GM12878 (cell line): ENCODE measurements at regions of chr5 and their contacts with region 1.

Region 1: GRCh38 chr5:154467655-154468354 is 10.2 kb downstream of the HAND1 start:
- DNase-seq: peak; percentile 42
- ATAC-seq: peak; percentile 99
- H3K4me3 ChIP-seq: no peak overlapping the region
- H3K27ac ChIP-seq: no peak overlapping the region
- H3K4me1 ChIP-seq: peaks cover 12% of the 10 kb centered on the region
- H3K27me3 ChIP-seq: peaks cover 0 to 3% of the 10 kb centered on the region in 2 experiments; a peak in 1 of 4 replicates
- CTCF ChIP-seq: peak; percentile 89 to 96 (median 92)
- EP300 ChIP-seq: no peak
- POLR2A ChIP-seq: no peak
- RAD21 ChIP-seq: peak; percentile 98

Region 2: DNA sequence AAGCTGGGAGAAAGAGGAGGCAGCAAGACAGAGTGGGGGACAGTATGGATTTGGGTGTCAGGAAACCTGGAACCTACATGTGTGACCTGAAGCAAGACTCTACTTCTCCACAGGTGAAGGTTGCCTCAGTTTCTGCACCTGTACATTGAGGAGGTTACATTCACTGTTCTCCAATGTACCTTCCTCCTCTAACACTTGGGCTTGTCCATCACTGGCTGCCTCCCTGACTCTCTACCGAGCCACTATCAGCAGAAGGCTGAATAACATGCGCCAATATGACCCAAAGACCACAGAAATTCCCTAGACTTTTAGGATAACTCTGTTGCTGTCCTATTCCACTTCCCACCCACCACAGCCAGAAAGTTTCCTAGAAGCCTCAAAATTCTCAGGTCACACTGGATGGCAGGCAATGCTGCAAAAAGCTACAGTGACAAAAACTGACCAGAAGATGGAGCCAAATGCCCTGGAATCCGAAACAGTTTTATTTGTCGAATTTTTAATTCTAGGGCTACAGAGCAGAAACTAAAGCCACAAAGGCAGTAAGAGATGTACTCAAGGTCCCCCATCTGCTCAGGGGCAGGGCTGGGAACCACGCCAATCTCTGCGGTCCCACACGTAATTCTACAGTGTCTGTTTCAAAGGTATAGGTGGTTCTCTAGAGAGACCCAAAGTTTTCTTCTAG is 493.5 kb before region 1 on chr5:
- CTCF ChIA-PET with region 1: interaction called, 5 read pairs
- POLR2A ChIA-PET with region 1: no interaction called
- RAD21 ChIA-PET with region 1: interaction called, 8 read pairs
- SMC1A ChIA-PET with region 1: no interaction called
- in situ Hi-C with region 1: no loop called
- intact Hi-C with region 1: loop called (anchors 5 kb)
- DNase-seq: no peak
- ATAC-seq: peak; percentile 83
- H3K4me3 ChIP-seq: no peak overlapping the region
- H3K27ac ChIP-seq: no peak overlapping the region
- H3K4me1 ChIP-seq: no peaks in the 10 kb centered on the region
- H3K27me3 ChIP-seq: peaks cover 2% of the 10 kb centered on the region in 2 experiments; a peak in 2 of 4 replicates
- CTCF ChIP-seq: peak; percentile 58 to 79 (median 75); a peak in 5 of 6 replicates
- EP300 ChIP-seq: no peak
- POLR2A ChIP-seq: no peak
- RAD21 ChIP-seq: peak; percentile 90

Region 3: GRCh38 chr5:154445422-154446182 is 22.2 kb before region 1 on chr5 and contains the start of gene SAP30L:
- CTCF ChIA-PET with region 1: interaction called, 13 read pairs
- POLR2A ChIA-PET with region 1: no interaction called
- RAD21 ChIA-PET with region 1: interaction called, 4 read pairs
- SMC1A ChIA-PET with region 1: interaction called, 7 read pairs
- in situ Hi-C with region 1: no loop called
- intact Hi-C with region 1: no loop called
- DNase-seq: peak; percentile 81
- ATAC-seq: peak; percentile 91
- H3K4me3 ChIP-seq: peak within 1 kb of the TSS; percentile 87
- H3K27ac ChIP-seq: peak within 1 kb of the TSS; percentile 84
- H3K4me1 ChIP-seq: peaks cover 5% of the 10 kb centered on the region
- H3K27me3 ChIP-seq: no peaks in the 10 kb centered on the region
- CTCF ChIP-seq: no peak
- EP300 ChIP-seq: no peak
- POLR2A ChIP-seq: peak; percentile 85
- RAD21 ChIP-seq: no peak
- polyA plus RNA-seq, gene SAP30L: 2.4 to 15.4 TPM

Region 4: GRCh38 chr5:154505611-154506010 is 37.8 kb after region 1 on chr5:
- CTCF ChIA-PET with region 1: interaction called, 24 read pairs
- POLR2A ChIA-PET with region 1: no interaction called
- RAD21 ChIA-PET with region 1: interaction called, 19 read pairs
- SMC1A ChIA-PET with region 1: interaction called, 13 read pairs
- in situ Hi-C with region 1: no loop called
- intact Hi-C with region 1: no loop called
- DNase-seq: no peak
- ATAC-seq: no peak
- H3K4me3 ChIP-seq: no peak overlapping the region
- H3K27ac ChIP-seq: no peak overlapping the region
- H3K4me1 ChIP-seq: peaks cover 41% of the 10 kb centered on the region
- H3K27me3 ChIP-seq: no peaks in the 10 kb centered on the region
- CTCF ChIP-seq: no peak
- EP300 ChIP-seq: no peak
- POLR2A ChIP-seq: no peak
- RAD21 ChIP-seq: no peak

Region 5: GRCh38 chr5:154570572-154571324 is 102.9 kb after region 1 on chr5:
- CTCF ChIA-PET with region 1: interaction called, 135 read pairs
- POLR2A ChIA-PET with region 1: no interaction called
- RAD21 ChIA-PET with region 1: interaction called, 81 read pairs
- SMC1A ChIA-PET with region 1: interaction called, 90 read pairs
- in situ Hi-C with region 1: no loop called
- intact Hi-C with region 1: loop called (anchors 1 kb)
- DNase-seq: no peak
- ATAC-seq: no peak
- H3K4me3 ChIP-seq: no peak overlapping the region
- H3K27ac ChIP-seq: no peak overlapping the region
- H3K4me1 ChIP-seq: peaks cover 6% of the 10 kb centered on the region
- H3K27me3 ChIP-seq: no peaks in the 10 kb centered on the region
- CTCF ChIP-seq: no peak
- EP300 ChIP-seq: no peak
- POLR2A ChIP-seq: no peak
- RAD21 ChIP-seq: no peak

Region 6: DNA sequence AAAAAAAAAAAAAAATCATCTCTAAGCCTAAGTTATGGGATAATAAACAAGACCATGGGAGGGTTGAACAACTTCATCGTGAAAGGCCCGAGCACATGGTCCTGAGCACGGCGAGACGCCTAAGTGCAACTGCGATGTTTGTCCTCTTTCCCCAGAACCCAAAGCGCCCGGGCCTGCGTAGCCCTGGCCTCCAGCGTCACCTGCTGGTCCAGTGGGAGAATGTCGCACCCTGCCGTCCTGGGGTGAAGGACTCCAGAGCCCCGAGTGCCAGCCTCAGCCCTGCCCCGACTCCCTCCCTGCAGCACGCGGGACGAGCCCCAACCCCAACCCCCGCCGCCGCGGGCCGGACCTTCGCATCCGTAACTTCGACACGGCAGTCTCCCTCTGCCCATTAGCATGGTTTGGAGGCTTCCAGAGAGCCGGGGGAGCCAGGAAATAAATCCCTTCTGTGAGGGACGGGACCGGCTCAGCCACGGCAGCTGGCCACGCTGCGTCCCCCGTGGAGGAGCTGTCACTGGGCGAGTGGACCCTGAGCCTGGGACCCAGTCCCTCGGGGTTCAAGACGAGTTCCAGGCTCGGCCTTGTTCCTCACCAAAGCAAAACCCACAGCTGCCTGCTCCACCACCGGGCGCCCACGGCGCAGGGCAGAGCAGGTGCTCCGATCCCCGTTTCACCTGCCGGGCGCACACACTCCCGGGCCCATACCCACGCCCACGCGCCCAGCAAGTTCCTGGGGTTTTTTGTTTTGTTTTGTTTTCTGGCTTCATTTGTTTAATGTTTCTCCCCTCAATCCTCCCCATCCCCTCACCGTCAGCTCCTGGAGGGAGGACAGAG is 142.7 kb after region 1 on chr5:
- CTCF ChIA-PET with region 1: interaction called, 121 read pairs
- POLR2A ChIA-PET with region 1: no interaction called
- RAD21 ChIA-PET with region 1: interaction called, 52 read pairs
- SMC1A ChIA-PET with region 1: interaction called, 81 read pairs
- in situ Hi-C with region 1: loop called (anchors 5 kb)
- intact Hi-C with region 1: loop called (anchors 1 kb)
- DNase-seq: peak; percentile 27
- ATAC-seq: peak; percentile 98
- H3K4me3 ChIP-seq: peak overlapping the region; percentile 72; the same call in 1 of the 2 replicates
- H3K27ac ChIP-seq: no peak overlapping the region
- H3K4me1 ChIP-seq: peaks cover 12% of the 10 kb centered on the region
- H3K27me3 ChIP-seq: peaks cover 4 to 7% of the 10 kb centered on the region in 2 experiments; a peak in 3 of 4 replicates
- CTCF ChIP-seq: peak; percentile 91 to 99 (median 96); a peak in 5 of 6 replicates
- EP300 ChIP-seq: no peak
- POLR2A ChIP-seq: no peak
- RAD21 ChIP-seq: peak; percentile 99